Dorsolateral prefrontal cortex (tissue), 120 donors: ENCODE measurements at regions of chr1 and their contacts with region 1.

Region 1: GRCh38 chr1:173476664-173477285 is 360 bp upstream of the PRDX6 start:
- DNase-seq: peak; percentile 93 to 96 (median 95)
- H3K4me3 ChIP-seq: peak overlapping the region; percentile 63 to 98 (median 92)
- H3K27ac ChIP-seq: peak overlapping the region in 58 of 59 donors; percentile 54 to 99 (median 88)
- H3K27me3 ChIP-seq: no peaks in the 10 kb centered on the region
- CTCF ChIP-seq: peak in 42 of 56 donors; percentile 5 to 62 (median 35)

Region 2: DNA sequence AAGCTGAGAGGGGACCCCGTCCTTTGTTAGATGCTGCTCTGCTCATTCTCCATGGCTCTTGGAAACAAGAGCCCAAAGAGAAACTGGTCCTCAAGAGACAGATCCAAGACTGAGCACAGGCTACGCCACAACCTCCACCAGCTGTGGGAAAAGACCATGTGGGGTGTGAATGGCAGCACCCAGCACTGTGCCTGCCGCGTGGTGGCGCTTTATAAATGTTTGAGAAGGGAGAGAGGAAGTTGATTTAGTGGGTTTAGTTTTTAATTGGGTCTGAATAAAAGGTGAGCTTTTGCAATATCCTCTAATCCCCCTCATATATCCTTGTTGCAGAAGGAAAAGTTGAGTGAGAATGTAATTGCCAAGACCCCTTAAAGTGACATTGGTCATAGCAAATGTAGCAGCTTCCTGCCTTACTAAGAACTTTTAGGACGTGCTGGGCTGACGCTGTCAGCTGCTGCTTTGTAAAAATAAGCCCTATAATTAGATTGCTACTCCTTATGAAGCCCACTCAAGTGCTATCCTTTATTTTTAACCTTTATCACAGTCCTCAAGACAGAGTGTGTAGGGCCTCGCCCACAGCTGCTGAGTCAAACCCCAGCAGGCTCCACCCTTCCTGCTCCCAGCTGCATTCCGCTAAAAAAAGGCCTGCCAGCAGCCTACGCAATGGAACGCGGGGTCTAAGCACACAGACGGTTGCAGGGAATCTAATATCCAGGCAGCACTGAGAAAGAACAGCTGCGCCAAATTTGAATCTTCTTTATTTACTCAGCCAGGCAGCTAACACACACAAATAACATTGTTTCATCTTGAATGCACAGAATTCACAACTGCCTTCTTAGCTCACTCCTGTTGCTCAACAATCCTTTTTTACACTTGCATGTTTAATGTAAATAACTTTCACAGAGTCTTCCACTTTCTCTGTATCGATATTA is 47.0 kb before region 1 on chr1:
- intact Hi-C with region 1: loop called (anchors 1 to 2 kb)
- DNase-seq: peak; percentile 14 to 91 (median 81)
- H3K4me3 ChIP-seq: peak overlapping the region in 57 of 59 donors; percentile 2 to 56 (median 40)
- H3K27ac ChIP-seq: peak overlapping the region in 58 of 59 donors; percentile 23 to 89 (median 80)
- H3K27me3 ChIP-seq: no peaks in the 10 kb centered on the region
- CTCF ChIP-seq: peak; percentile 52 to 84 (median 72)

Region 3: DNA sequence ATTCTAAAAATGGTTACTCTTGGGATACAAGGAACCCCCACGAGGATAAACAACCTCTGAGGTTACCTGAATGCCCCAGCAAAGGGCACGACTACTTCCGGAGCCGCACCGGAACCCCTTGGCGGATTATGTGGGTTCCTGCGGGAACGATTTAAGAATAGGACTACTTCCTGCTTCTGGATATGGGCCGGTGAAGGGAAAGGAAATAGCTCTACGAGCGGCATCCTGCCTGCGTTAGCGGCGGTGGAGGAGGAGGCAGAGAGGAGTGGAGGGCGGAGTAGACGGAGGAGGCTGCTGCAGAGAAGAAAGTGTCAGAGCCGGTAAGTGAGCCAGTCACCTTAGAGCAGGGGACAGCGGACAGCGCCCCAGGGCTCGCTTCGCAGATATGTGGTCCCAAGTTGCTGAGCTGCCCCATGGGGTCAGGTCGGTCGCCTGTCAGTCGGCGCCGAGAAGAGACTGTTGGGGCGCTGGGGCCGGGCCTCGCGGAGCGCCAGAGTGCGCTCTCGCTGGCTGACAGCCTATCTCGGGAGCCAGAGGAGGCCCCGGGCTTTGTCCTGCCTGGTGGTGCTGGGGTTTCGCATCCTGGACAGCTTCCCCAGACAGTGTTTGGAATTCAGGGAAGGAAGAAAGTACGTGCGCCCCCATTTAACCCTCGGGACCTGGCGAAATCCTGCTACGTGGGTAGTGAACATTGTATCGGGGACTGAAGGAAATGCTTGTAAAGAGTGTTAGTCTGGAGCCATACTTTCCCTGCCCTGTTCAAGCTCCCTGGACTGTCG is 238.2 kb after region 1 on chr1 and contains the start of gene KLHL20:
- intact Hi-C with region 1: loop called (anchors 5 kb)
- DNase-seq: peak; percentile 53 to 86 (median 76)
- H3K4me3 ChIP-seq: peak within 1 kb of the TSS; percentile 66 to 99 (median 88)
- H3K27ac ChIP-seq: peak within 1 kb of the TSS; percentile 5 to 95 (median 85)
- H3K27me3 ChIP-seq: peaks cover 0 to 19% (median 0%) of the 10 kb centered on the region in 45 donors
- CTCF ChIP-seq: peak in 41 of 56 donors; percentile 1 to 54 (median 27)
- total RNA-seq, gene KLHL20: 17.8 to 32.2 (median 24.3) TPM

Region 4: GRCh38 chr1:173824331-173825081 is 347.7 kb after region 1 on chr1 and contains the starts of genes CENPL and DARS2:
- intact Hi-C with region 1: loop called in 1 of 2 experiments (anchors 5 kb)
- DNase-seq: peak; percentile 85 to 97 (median 95)
- H3K4me3 ChIP-seq: peak within 1 kb of the TSS; percentile 61 to 98 (median 86)
- H3K27ac ChIP-seq: peak within 1 kb of the TSS; percentile 1 to 96 (median 89)
- H3K27me3 ChIP-seq: no peaks in the 10 kb centered on the region
- CTCF ChIP-seq: peak in 38 of 56 donors; percentile 5 to 53 (median 34)
- total RNA-seq, gene CENPL: 2.4 to 10.9 (median 5.3) TPM
- total RNA-seq, gene DARS2: 7.0 to 13.9 (median 9.8) TPM

Region 5: DNA sequence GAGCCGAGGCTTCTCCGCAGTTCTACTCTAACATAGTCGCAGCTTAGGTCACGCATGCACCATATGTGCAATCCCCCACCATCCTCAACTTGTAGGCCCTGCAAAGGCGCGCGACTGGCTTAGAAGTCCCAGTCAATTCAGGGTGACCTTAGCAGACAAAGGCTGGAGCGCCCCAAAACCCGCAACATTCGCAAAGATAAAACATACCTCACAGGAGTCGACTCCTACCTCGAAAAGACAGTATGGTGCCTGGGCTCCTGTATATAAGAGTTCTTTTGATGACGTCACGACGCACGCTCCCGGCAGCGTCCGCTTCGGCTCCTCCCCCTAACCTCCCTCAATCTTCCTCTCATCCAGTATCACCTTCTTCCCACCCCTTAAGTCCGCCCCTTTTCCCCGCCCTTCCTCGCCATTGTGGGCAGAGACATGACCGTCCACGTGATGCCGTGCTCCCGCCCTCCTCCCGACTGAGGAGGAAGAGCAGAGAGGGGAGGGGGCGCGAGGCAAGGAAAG is 391.0 kb after region 1 on chr1 and contains the start of gene GAS5:
- intact Hi-C with region 1: loop called (anchors 2 to 5 kb)
- DNase-seq: peak; percentile 91 to 99 (median 98)
- H3K4me3 ChIP-seq: peak within 1 kb of the TSS; percentile 64 to 99 (median 91)
- H3K27ac ChIP-seq: peak within 1 kb of the TSS; percentile 83 to 99 (median 97)
- H3K27me3 ChIP-seq: no peaks in the 10 kb centered on the region
- CTCF ChIP-seq: peak in 9 of 56 donors; percentile 1 to 33 (median 22)
- total RNA-seq, gene GAS5: 88.6 to 204 (median 118) TPM

Region 6: DNA sequence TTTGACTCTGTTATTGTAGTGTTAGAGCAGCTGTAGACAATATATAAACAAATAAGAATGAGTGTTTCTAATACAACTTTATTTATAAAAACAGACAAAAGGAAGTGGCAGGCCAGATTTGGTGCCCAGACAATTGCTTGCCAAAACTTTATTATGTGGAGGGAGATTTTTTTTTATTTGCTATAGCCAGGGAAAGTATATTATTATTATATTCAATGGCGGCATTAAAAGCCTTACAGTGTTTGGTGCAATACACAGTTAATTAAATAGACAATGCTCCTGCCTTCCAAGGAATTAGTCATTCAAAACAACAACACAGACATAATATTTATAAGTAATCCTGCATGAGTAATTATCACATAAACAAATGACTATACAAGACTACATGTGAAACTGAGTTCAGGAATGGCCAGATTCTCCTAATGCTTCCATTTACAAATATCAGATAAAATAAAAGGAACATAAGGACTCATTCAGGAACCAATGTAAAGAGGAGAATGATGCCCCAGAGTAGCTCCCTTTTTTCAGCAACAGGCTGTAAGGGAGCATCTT is 556.0 kb after region 1 on chr1:
- intact Hi-C with region 1: no loop called
- DNase-seq: no peak
- H3K4me3 ChIP-seq: no peak overlapping the region
- H3K27ac ChIP-seq: no peak overlapping the region
- H3K27me3 ChIP-seq: no peaks in the 10 kb centered on the region
- CTCF ChIP-seq: no peak

Region 7: GRCh38 chr1:174262349-174263241 is 785.8 kb after region 1 on chr1:
- intact Hi-C with region 1: loop called in 1 of 2 experiments (anchors 5 kb)
- DNase-seq: peak in 9 of 10 donors; percentile 20 to 64 (median 47)
- H3K4me3 ChIP-seq: peak overlapping the region in 35 of 59 donors; percentile 3 to 58 (median 29)
- H3K27ac ChIP-seq: peak overlapping the region in 58 of 59 donors; percentile 18 to 95 (median 86)
- H3K27me3 ChIP-seq: no peaks in the 10 kb centered on the region
- CTCF ChIP-seq: peak; percentile 68 to 96 (median 85)